BJ (cell line): ENCODE measurements at regions of chr7 and their contacts with region 1.

Region 1: DNA sequence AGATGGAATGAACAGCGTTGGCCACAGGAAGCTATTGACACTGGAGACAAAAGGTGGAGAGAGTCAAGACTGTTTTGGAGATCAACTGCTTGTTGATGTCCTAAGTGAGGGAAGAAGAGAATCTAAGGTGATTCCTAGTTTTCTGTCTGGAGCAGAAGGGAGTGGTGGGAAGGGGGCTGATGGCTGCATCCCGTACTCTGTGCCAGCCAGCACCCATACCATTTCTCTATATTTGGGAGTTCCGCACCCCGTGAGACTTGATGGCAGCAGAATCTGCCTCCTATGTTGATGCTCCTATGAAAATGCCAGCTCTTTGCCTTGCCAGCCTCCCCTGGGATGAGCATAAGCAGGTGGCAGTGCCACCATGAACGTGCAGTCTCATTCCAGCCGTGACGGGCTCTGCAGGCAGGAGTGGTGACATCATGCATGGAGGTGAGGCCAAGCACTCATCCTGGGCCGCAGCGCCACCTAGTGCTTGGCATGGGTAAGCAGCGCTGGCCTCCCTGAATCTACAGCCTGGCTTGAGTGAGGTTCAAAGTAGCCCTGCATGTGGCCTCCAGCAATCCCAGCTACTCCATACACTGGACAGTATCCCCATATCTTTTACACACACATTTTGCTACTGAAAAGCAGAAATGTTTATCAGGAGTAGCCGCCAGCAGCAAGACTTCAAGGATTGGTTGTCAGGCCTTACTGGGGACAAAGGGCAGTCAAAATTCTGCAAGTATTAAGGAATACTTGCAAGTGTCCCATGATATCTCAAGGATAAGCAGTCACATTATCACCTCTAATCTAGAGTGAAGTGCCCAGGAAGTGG is 43.0 kb downstream of the PODXL start:
- DNase-seq: no peak
- H3K4me3 ChIP-seq: no peak overlapping the region
- H3K27me3 ChIP-seq: no peaks in the 10 kb centered on the region
- CTCF ChIP-seq: peak; percentile 99

Region 2: GRCh38 chr7:131370523-131370968 is 142.9 kb before region 1 on chr7:
- CTCF ChIA-PET with region 1: no interaction called
- POLR2A ChIA-PET with region 1: no interaction called
- DNase-seq: no peak
- H3K4me3 ChIP-seq: no peak overlapping the region
- H3K27me3 ChIP-seq: no peaks in the 10 kb centered on the region
- CTCF ChIP-seq: no peak

Region 3: GRCh38 chr7:131501422-131501821 is 12.0 kb before region 1 on chr7:
- CTCF ChIA-PET with region 1: interaction called, 23 read pairs
- POLR2A ChIA-PET with region 1: no interaction called
- DNase-seq: no peak
- H3K4me3 ChIP-seq: no peak overlapping the region
- H3K27me3 ChIP-seq: no peaks in the 10 kb centered on the region
- CTCF ChIP-seq: no peak

Region 4: GRCh38 chr7:131625817-131626372 is 112.4 kb after region 1 on chr7:
- CTCF ChIA-PET with region 1: interaction called, 12 read pairs
- POLR2A ChIA-PET with region 1: no interaction called
- DNase-seq: peak; percentile 47
- H3K4me3 ChIP-seq: no peak overlapping the region
- H3K27me3 ChIP-seq: no peaks in the 10 kb centered on the region
- CTCF ChIP-seq: peak; percentile 50